Dorsolateral prefrontal cortex (tissue), 120 donors: ENCODE measurements at regions of chr14 and their contacts with region 1.

Region 1: GRCh38 chr14:73568381-73568781 is 632 bp upstream of the ACOT2 start:
- DNase-seq: peak in 2 of 10 donors; percentile 5 to 23
- H3K4me3 ChIP-seq: peak overlapping the region; percentile 44 to 81 (median 71)
- H3K27ac ChIP-seq: peak overlapping the region in 51 of 59 donors; percentile 45 to 94 (median 85)
- H3K27me3 ChIP-seq: no peaks in the 10 kb centered on the region
- CTCF ChIP-seq: no peak

Region 2: GRCh38 chr14:73503648-73504047 is 64.7 kb before region 1 on chr14:
- intact Hi-C with region 1: loop called in 1 of 2 experiments (anchors 10 kb)
- DNase-seq: no peak
- H3K4me3 ChIP-seq: no peak overlapping the region
- H3K27ac ChIP-seq: no peak overlapping the region
- H3K27me3 ChIP-seq: no peaks in the 10 kb centered on the region
- CTCF ChIP-seq: no peak